ENCODE measurements at regions of chr1 and their contacts with region 1.

Region 1: GRCh38 chr1:113042285-113043143 is 30.5 kb upstream of the LRIG2 start:
- DNase-seq: peak; percentile 78 to 79
- H3K4me3 ChIP-seq: no peak overlapping the region
- H3K27ac ChIP-seq: no peak overlapping the region
- H3K4me1 ChIP-seq: peaks cover 0 to 8% (median 0%) of the 10 kb centered on the region in 4 donors
- H3K27me3 ChIP-seq: no peaks in the 10 kb centered on the region
- CTCF ChIP-seq: peak; percentile 65 to 74

Region 2: GRCh38 chr1:111961016-111961415 is 1081.5 kb before region 1 on chr1:
- intact Hi-C with region 1: loop called (anchors 5 kb)
- DNase-seq: no peak
- H3K4me3 ChIP-seq: no peak overlapping the region
- H3K27ac ChIP-seq: no peak overlapping the region
- H3K4me1 ChIP-seq: peaks cover 0 to 7% (median 1%) of the 10 kb centered on the region in 4 donors
- H3K27me3 ChIP-seq: no peaks in the 10 kb centered on the region
- CTCF ChIP-seq: no peak

Region 3: DNA sequence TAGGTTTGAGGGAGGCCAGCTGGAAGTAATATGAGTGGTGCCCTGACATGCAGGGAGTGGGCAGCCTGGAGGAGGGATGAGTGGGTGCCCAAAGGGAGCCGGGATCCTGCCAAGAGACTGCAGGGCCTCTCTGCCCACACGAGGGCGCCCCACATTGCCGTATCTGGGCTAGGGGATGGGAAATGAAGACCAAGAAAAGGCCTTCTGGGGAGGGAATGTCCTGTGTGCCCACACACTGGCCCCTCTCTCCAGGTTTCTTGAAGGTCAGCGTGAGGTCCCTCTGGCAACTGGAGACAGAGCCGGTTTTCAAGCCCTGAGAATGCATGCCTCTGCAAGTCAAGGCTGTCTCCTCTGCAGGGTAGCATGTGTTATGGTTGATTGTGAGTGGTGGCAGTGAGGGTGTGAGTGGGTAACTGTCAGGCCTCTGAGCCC is 233.2 kb before region 1 on chr1:
- intact Hi-C with region 1: loop called (anchors 2 kb)
- DNase-seq: peak in 1 of 2 donors; percentile 64
- H3K4me3 ChIP-seq: no peak overlapping the region
- H3K27ac ChIP-seq: no peak overlapping the region
- H3K4me1 ChIP-seq: no peaks in the 10 kb centered on the region
- H3K27me3 ChIP-seq: no peaks in the 10 kb centered on the region
- CTCF ChIP-seq: peak; percentile 60

Region 4: GRCh38 chr1:112881742-112882127 is 160.8 kb before region 1 on chr1:
- intact Hi-C with region 1: loop called (anchors 2 kb)
- DNase-seq: no peak
- H3K4me3 ChIP-seq: no peak overlapping the region
- H3K27ac ChIP-seq: no peak overlapping the region
- H3K4me1 ChIP-seq: no peaks in the 10 kb centered on the region
- H3K27me3 ChIP-seq: no peaks in the 10 kb centered on the region
- CTCF ChIP-seq: no peak

Region 5: DNA sequence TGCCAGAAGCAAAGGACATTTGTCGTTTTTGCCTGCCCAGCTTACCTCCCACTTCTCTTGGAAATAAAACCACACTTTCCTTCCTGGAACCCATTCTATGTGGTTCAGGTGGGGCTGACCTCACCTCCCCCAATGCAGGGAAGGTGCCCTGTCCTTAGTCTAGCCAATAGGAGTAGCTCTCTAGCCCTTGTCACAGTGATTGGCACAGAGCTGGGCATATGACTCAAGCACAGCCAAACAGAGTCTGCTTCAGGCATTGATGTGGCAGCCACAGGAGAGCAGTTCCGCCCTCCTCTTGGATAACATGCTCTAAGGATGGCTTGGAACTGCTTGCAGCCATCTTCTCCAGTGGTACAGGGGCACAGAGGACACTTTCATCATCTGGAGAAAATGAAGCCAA is 164.5 kb after region 1 on chr1:
- intact Hi-C with region 1: no loop called
- DNase-seq: no peak
- H3K4me3 ChIP-seq: no peak overlapping the region
- H3K27ac ChIP-seq: no peak overlapping the region
- H3K4me1 ChIP-seq: no peaks in the 10 kb centered on the region
- H3K27me3 ChIP-seq: peaks cover 0 to 3% of the 10 kb centered on the region in 2 donors
- CTCF ChIP-seq: no peak

Measured in tibial artery (tissue), 4 donors.